Mammary epithelial cell (primary cell): ENCODE measurements at regions of chr13 and their contacts with region 1.

Region 1: DNA sequence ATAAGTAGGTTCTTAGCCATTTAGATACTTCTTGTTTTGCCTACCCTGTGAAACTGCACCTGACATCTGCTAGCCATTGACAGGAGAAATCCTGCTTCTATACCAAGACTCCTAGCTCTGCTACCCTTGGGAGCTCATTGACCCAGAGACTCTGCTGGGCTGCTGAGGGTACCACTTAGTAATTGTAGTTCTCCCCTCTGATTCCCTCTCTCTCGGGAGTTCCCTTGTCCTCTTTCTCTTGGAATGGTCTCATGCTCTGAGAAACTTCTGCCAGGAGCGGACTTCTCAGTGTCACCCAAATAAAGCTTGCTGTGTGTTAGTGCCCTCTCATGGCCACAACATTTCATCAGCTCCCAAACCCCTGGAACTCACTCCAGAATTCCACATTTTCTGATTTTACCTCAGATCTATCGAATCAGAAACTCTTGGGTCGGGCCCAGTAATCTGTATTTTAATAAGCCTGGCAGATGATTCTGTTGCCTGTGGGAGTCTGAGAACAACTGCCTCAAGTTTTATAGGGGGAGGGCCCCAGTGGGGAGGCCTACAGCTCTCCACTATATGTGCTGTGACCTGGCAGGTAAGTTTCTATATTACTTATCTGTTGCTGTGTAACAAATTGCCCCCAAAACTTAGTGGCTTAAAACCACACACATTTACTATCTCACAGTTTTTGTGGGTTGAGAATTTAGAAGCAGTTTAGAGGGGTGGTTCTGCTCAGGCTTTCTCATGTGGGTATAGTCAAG is 221.1 kb downstream of the TDRD3 start:
- DNase-seq: no peak
- H3K4me3 ChIP-seq: no peak overlapping the region
- H3K27ac ChIP-seq: no peak overlapping the region
- H3K4me1 ChIP-seq: no peaks in the 10 kb centered on the region
- H3K27me3 ChIP-seq: peaks cover 6% of the 10 kb centered on the region
- CTCF ChIP-seq: peak in 1 of 2 donors; percentile 39

Region 2: DNA sequence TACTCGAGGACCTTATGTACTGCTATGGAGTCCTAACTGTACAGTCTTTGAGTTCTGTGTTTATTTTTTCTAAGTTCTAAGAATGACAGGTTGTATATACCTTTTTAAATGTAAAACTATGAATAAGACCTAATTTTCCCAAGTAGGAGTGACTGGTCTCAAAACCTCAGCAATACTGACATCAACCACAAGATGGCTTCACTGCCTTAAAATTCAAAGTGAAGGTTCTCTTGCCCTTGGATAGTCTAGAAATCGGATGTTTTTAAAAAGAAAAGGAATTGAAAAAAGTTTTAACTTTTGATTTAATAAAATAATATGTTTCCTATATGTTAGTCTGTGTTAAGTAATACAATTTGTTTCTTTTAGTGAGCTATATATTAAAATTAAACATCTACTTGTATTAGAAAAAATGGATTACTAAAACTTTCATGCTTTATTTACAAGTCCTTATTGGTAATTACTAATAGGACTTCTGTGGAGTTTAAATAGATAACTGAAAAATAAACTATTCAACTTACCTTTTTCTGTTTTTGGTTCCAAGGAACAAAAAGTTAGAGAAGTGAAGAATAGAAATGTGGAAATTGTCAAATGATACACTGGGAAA is 169.2 kb before region 1 on chr13:
- CTCF ChIA-PET with region 1: no interaction called
- dilution Hi-C with region 1: no loop called
- in situ Hi-C with region 1: no loop called
- intact Hi-C with region 1: loop called (anchors 5 kb)
- DNase-seq: peak; percentile 27
- H3K4me3 ChIP-seq: no peak overlapping the region
- H3K27ac ChIP-seq: no peak overlapping the region
- H3K4me1 ChIP-seq: no peaks in the 10 kb centered on the region
- H3K27me3 ChIP-seq: no peaks in the 10 kb centered on the region
- CTCF ChIP-seq: peak; percentile 78 to 80

Region 3: DNA sequence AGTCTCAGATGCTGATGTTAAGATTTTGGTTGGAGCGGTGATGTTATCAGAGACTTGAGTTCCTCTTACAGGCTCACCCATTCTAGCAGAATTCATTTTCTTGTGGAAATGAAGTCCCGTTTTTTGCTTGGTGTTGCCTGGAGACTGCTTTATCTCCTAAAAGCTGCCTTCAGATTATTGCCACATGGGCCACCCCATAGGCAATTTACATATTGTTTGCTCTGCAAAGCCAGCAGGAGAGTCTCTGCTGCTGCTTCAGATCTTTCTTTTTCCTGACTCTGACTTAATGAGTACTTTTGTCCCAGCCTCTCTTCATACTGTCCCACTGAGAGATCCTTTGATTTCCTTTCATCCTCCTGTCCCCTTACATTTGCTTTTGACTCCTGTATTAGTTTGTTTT is 106.5 kb before region 1 on chr13:
- CTCF ChIA-PET with region 1: no interaction called
- dilution Hi-C with region 1: no loop called
- in situ Hi-C with region 1: no loop called
- intact Hi-C with region 1: no loop called
- DNase-seq: no peak
- H3K4me3 ChIP-seq: no peak overlapping the region
- H3K27ac ChIP-seq: no peak overlapping the region
- H3K4me1 ChIP-seq: no peaks in the 10 kb centered on the region
- H3K27me3 ChIP-seq: no peaks in the 10 kb centered on the region
- CTCF ChIP-seq: no peak

Region 4: DNA sequence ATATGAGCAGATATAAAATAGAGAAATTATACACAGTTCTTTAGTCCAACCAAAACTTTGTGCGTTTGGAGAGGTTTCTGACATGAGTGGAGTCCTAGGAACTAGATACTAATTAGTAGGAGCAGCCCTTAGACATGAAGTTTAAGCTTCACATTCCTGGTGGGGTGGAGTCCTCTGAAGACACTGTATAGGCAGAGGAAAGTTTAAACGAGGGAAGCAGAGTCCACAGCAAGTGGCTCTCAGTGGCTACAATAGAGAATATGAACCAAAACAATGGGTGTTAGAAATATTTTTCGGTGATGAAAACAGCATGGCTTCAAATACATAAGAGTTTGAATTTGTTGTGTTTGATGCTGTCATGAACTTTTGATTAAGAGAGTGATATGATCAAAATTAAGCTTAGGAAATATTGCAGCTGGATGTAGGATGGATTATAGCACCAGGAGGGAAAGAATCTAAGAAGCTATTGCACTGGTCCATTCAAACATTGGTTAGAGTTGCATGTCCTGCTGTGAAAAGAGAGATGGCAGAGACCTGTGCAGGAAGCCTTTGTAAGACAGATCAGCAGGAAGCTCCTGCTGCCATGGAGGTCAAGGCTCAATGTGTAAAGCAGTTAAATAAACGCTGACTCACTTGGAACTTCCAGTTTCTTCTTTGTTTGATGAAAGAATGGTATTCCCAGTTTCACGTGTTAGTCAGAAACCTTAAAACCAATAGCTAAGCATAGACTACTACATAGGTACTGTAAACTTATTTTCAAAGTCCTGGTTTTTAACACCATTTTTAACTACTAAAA is 46.0 kb before region 1 on chr13:
- CTCF ChIA-PET with region 1: no interaction called
- dilution Hi-C with region 1: no loop called
- in situ Hi-C with region 1: no loop called
- intact Hi-C with region 1: no loop called
- DNase-seq: peak; percentile 91
- H3K4me3 ChIP-seq: no peak overlapping the region
- H3K27ac ChIP-seq: peak overlapping the region; percentile 15
- H3K4me1 ChIP-seq: peaks cover 10% of the 10 kb centered on the region
- H3K27me3 ChIP-seq: no peaks in the 10 kb centered on the region
- CTCF ChIP-seq: no peak

Region 5: GRCh38 chr13:60671386-60671785 is 53.2 kb after region 1 on chr13:
- CTCF ChIA-PET with region 1: no interaction called
- dilution Hi-C with region 1: no loop called
- in situ Hi-C with region 1: no loop called
- intact Hi-C with region 1: no loop called
- DNase-seq: no peak
- H3K4me3 ChIP-seq: no peak overlapping the region
- H3K27ac ChIP-seq: no peak overlapping the region
- H3K4me1 ChIP-seq: no peaks in the 10 kb centered on the region
- H3K27me3 ChIP-seq: no peaks in the 10 kb centered on the region
- CTCF ChIP-seq: no peak